Activated CD4-positive, alpha-beta T cell treated with anti-CD3 and anti-CD28 coated beads, Interleukin-2, amount 10 ng/mL, durations not matched to agents 7 days and 5 days (primary cell): ENCODE measurements at regions of chr9 and their contacts with region 1.

Region 1: DNA sequence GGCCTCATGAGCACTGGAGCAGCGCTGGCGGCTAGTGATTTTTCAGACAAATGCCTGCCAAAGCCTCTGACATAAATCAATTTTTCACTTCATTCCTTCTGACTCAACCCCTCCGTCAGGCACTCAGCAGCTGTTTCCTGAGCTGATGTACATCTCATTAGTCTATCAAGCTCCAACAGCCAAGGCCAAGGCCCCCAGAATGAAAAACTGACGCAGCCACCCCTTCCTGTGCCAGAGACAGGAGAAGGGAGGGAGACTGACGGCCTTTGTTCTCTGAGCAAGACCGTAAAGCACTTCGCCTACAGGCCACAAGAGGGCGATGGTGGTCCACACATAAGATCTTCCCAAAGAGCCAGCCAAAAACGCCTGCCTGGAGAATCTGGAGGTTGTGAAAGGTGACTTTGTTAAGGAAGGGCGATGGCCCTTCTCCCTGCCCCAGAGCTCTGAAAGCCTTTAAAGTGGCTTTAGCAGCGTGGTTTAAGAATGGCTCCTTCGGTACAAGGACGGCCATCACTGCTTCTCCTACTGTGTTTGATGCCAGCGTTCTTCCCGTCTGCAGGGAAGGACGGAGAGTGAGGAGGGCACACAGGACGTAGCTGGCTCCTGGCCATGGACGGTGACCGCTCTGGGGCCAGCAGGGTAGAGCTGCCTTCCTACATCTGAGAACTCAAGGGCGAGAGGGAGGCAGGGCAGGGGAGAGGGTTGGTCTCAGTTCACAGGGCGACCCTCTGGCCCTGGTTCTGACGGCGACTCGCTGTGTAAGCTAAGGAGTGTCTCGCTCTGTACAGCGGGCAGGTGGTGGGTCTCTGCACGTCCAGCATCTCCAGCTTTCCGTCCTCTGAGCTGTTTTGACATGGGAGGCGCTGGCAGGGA is 37.0 kb downstream of the ALG2 start:
- DNase-seq: peak; percentile 79
- H3K4me3 Mint-ChIP-seq: no peak overlapping the region
- H3K27ac Mint-ChIP-seq: no peak overlapping the region
- H3K4me1 Mint-ChIP-seq: peaks cover 50% of the 10 kb centered on the region
- H3K27me3 Mint-ChIP-seq: no peaks in the 10 kb centered on the region

Region 2: GRCh38 chr9:99019790-99020331 is 164.8 kb before region 1 on chr9:
- CTCF ChIA-PET with region 1: no interaction called
- POLR2A ChIA-PET with region 1: no interaction called
- DNase-seq: no peak
- H3K4me3 Mint-ChIP-seq: no peak overlapping the region
- H3K27ac Mint-ChIP-seq: no peak overlapping the region
- H3K4me1 Mint-ChIP-seq: no peaks in the 10 kb centered on the region
- H3K27me3 Mint-ChIP-seq: peaks cover 4% of the 10 kb centered on the region

Region 3: GRCh38 chr9:99173570-99174504 is 10.9 kb before region 1 on chr9:
- CTCF ChIA-PET with region 1: interaction called, 10 read pairs
- POLR2A ChIA-PET with region 1: no interaction called
- DNase-seq: no peak
- H3K4me3 Mint-ChIP-seq: no peak overlapping the region
- H3K27ac Mint-ChIP-seq: no peak overlapping the region
- H3K4me1 Mint-ChIP-seq: peaks cover 6% of the 10 kb centered on the region
- H3K27me3 Mint-ChIP-seq: no peaks in the 10 kb centered on the region

Region 4: GRCh38 chr9:99239341-99240060 is 54.8 kb after region 1 on chr9:
- CTCF ChIA-PET with region 1: no interaction called
- POLR2A ChIA-PET with region 1: no interaction called
- DNase-seq: no peak
- H3K4me3 Mint-ChIP-seq: no peak overlapping the region
- H3K27ac Mint-ChIP-seq: no peak overlapping the region
- H3K4me1 Mint-ChIP-seq: peaks cover 16% of the 10 kb centered on the region
- H3K27me3 Mint-ChIP-seq: no peaks in the 10 kb centered on the region

Region 5: GRCh38 chr9:99296291-99296951 is 111.7 kb after region 1 on chr9:
- CTCF ChIA-PET with region 1: no interaction called
- POLR2A ChIA-PET with region 1: no interaction called
- DNase-seq: peak; percentile 23
- H3K4me3 Mint-ChIP-seq: no peak overlapping the region
- H3K27ac Mint-ChIP-seq: no peak overlapping the region
- H3K4me1 Mint-ChIP-seq: peaks cover 4% of the 10 kb centered on the region
- H3K27me3 Mint-ChIP-seq: peaks cover 13% of the 10 kb centered on the region